Sciatic nerve (tissue), 2 donors: ENCODE measurements at regions of chr4 and their contacts with region 1.

Region 1: DNA sequence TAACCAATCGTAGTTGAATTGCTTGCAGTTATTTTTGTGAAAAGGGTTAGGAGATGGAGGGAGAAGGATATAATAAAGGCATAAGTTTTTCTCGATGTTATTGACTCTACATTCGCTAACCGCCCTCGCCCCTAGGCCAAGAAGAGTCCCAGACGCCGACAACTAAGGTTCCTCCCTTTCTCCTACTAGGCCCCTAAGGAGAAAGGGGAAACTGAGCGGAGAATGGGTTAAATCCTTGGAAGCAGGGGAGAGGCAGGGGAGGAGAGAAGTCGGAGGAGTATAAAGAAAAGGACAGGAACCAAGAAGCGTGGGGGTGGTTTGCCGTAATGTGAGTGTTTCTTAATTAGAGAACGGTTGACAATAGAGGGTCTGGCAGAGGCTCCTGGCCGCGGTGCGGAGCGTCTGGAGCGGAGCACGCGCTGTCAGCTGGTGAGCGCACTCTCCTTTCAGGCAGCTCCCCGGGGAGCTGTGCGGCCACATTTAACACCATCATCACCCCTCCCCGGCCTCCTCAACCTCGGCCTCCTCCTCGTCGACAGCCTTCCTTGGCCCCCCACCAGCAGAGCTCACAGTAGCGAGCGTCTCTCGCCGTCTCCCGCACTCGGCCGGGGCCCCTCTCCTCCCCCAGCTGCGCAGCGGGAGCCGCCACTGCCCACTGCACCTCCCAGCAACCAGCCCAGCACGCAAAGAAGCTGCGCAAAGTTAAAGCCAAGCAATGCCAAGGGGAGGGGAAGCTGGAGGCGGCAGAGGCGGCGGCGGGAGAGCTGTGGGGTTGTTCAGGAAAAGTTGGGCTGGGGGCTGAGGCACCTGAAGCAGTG is 5.9 kb downstream of the ATOH1 start:
- DNase-seq: no peak
- ATAC-seq: peak; percentile 28

Region 2: DNA sequence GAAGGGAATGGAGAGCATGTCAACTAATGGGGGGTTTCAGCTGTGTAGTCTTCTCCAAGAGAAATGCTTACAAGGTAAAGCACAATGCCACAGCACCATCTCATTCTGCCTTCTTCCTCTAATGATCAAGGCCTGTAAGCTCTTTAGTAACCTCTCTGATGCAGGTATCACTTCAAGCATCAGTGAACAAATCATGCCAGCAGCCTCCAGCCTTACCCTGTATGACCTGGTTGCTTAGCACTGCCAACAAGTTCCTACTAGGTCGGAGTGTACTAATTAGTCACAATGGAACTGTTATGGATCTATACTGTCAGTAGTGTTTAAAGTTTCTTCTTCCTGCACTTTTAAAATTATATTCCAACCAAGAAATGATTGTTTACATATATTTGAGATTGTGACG is 1333.0 kb before region 1 on chr4:
- intact Hi-C with region 1: no loop called
- DNase-seq: no peak
- ATAC-seq: no peak

Region 3: GRCh38 chr4:93461541-93461940 is 372.9 kb before region 1 on chr4:
- intact Hi-C with region 1: loop called (anchors 10 kb)
- DNase-seq: no peak
- ATAC-seq: no peak

Region 4: DNA sequence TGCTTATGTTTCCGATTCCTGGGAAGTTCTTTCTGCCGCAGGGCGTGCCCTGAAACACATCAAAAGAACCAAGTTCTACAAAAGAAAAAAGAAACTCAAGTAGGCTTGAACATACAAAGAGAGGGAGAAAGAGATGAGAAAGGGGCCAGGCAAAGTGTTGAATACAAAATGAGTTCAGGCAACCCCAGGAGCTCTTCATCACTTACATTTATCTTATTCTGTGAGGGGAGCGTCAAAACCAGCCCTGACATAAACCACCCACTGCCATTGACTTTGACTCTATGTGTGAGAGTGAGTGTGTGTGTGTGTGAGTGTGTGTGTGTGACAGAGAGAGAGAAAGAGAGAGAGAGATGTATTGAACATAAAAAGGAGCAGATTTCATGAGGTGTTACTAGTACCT is 32.4 kb before region 1 on chr4:
- intact Hi-C with region 1: no loop called
- DNase-seq: no peak
- ATAC-seq: no peak

Region 5: GRCh38 chr4:93855926-93856325 is 21.5 kb after region 1 on chr4:
- intact Hi-C with region 1: no loop called
- DNase-seq: no peak
- ATAC-seq: no peak

Region 6: GRCh38 chr4:93947286-93947685 is 112.8 kb after region 1 on chr4:
- intact Hi-C with region 1: no loop called
- DNase-seq: no peak
- ATAC-seq: no peak